WTC11 (cell line): ENCODE measurements at regions of chr22 and their contacts with region 1.

Region 1: DNA sequence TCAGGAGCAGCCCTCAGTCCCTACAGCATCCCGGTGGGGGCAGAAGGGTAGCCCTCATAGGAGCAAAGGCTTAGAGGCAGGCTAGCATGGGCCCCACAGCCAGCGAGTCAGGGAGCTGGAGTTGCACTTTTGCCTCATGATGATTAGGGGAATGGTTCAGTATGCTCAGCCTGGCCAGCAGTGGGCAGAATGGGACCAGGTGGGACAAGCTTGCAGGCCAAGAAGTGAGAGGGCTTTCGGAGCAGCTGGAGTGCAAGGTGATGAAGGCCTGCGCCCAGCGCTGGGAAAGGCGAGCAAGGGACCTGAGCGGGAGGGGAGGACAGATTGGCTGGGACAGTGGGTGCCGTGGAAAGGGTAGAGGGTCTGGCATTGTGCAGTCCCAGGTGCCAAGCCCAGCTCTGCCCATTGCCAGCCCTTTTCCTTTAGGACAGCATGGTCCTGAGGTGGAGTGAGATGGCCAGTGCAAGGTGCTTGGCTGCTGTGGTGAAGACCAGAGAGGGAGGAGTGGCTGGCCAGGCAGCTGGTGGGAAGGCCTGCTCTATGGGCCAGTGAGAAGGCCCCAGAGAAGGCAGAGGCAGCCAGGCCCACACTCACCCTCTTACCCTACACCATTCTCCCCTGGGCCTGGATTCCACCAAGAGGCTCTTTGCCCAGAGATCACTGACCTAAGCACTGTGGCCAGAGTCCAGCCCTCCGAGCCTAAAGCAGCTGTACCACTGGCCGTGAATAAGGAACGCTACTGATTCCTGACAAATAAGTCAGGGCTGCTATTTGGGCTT is 47.9 kb upstream of the SUSD2 start:
- DNase-seq: peak; percentile 42
- ATAC-seq: peak; percentile 74
- H3K4me3 Mint-ChIP-seq: no peak overlapping the region
- H3K27ac Mint-ChIP-seq: peak overlapping the region; percentile 80; the same call in 1 of the 2 replicates
- H3K4me1 Mint-ChIP-seq: peaks cover 4% of the 10 kb centered on the region; the same call in 1 of the 2 replicates
- H3K27me3 Mint-ChIP-seq: no peaks in the 10 kb centered on the region
- CTCF ChIP-seq: no peak

Region 2: GRCh38 chr22:24146194-24146616 is 12.8 kb after region 1 on chr22:
- CTCF ChIA-PET with region 1: interaction called, 14 read pairs
- POLR2A ChIA-PET with region 1: interaction called, 3 read pairs
- DNase-seq: peak; percentile 66
- ATAC-seq: peak; percentile 94
- H3K4me3 Mint-ChIP-seq: no peak overlapping the region
- H3K27ac Mint-ChIP-seq: peak overlapping the region; percentile 92
- H3K4me1 Mint-ChIP-seq: peaks cover 27% of the 10 kb centered on the region
- H3K27me3 Mint-ChIP-seq: no peaks in the 10 kb centered on the region
- CTCF ChIP-seq: no peak